ENCODE measurements at regions of chr11 and their contacts with region 1.

Region 1: GRCh38 chr11:111601979-111602864 is at the start of gene SIK2:
- DNase-seq: peak; percentile 98
- H3K4me3 ChIP-seq: peak within 1 kb of the TSS; percentile 82 to 95
- H3K27ac ChIP-seq: peak within 1 kb of the TSS; percentile 74 to 90
- H3K4me1 ChIP-seq: peaks cover 12 to 13% of the 10 kb centered on the region in 2 experiments; a peak in 3 of 4 replicates
- H3K27me3 ChIP-seq: no peaks in the 10 kb centered on the region
- CTCF ChIP-seq: peak; percentile 79
- EP300 ChIP-seq: peak; percentile 17 to 41; a peak in 3 of 4 replicates
- RAD21 ChIP-seq: peak; percentile 98
- polyA plus RNA-seq, gene SIK2: 8.9 and 9.7 TPM in 2 replicates

Region 2: DNA sequence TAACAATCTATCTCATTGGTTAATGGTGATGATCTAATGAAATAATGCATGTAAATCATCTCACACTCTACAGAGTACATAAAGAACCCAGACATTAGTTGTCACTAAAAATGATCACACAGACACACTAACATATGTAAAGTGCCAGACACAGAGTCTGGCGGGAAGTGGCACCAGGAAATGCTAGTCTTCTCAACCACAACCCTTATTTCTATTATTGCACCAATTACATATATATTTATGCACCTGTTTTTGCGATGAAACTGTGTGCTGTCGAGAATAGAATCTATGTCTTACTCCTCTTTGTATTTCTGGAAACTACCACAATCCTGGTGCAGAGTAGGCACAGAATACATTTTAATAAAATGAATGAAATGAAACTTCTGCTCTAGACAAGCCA is 329.8 kb before region 1 on chr11:
- CTCF ChIA-PET with region 1: no interaction called
- POLR2A ChIA-PET with region 1: no interaction called
- DNase-seq: no peak
- H3K4me3 ChIP-seq: no peak overlapping the region
- H3K27ac ChIP-seq: no peak overlapping the region
- H3K4me1 ChIP-seq: no peaks in the 10 kb centered on the region
- H3K27me3 ChIP-seq: peaks cover 6% of the 10 kb centered on the region
- CTCF ChIP-seq: no peak
- EP300 ChIP-seq: no peak
- RAD21 ChIP-seq: no peak

Region 3: DNA sequence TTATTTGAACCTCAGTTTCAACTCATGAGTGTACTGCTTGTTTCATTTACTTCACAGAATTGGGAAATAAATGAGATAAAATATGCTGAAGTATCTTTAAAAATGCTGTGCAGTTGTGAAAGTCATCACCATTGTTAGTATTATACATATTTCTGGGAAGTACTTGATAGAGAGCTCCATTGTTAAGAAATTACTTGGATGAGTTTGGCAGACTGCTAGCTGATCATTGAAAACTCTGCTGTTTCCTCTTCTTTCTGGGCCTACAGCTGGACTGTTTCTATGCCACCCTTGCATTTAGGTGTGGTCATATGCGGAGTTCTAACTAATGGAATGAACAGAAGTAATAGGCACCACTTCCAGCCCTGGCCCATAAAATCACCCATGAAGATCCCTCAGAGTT is 10.0 kb after region 1 on chr11:
- CTCF ChIA-PET with region 1: interaction called, 11 read pairs
- POLR2A ChIA-PET with region 1: no interaction called
- DNase-seq: no peak
- H3K4me3 ChIP-seq: no peak overlapping the region
- H3K27ac ChIP-seq: no peak overlapping the region
- H3K4me1 ChIP-seq: peaks cover 0 to 15% of the 10 kb centered on the region in 2 experiments; a peak in 2 of 4 replicates
- H3K27me3 ChIP-seq: no peaks in the 10 kb centered on the region
- CTCF ChIP-seq: no peak
- EP300 ChIP-seq: no peak
- RAD21 ChIP-seq: no peak

Region 4: DNA sequence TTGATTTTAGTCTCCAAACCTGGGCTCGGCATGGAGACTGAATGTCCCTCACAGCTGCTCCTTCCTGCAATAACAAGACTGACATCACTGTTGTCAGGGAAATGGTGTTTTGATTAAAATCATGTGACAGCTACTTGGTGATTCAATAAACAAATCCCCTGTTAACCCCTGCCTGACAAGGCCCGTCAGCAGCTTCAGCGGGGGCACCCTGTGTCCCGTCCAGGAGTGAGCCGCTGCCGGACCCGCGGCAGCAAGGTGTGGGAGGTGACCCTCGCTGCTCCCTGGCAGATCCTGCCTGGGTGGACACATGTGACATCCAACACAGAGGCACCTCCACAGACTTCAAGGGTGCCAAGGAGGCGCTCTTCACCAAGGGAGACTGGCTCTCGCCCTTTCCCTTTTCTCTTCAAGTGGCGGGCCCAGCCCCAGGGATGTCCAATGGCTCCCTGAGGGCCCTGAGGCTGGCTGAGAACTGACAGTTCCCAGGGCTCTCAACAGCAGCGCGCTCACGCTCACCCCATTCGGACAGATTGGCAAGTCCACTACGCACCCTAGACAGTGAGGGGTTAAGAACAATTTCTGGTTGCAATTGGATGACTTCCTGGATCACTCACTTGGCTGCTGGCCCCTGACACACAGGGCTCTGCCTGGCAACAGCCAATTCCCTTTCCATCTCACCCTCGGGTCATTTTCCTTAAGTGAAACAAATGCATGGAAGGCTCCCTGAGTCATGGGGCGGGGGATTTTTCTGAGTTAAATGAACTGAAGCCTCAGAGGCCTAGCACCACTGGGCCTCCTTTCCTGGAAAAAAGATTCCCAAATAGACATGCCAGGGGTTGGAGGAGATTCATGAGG is 133.3 kb after region 1 on chr11:
- CTCF ChIA-PET with region 1: interaction called, 11 read pairs
- POLR2A ChIA-PET with region 1: no interaction called
- DNase-seq: peak; percentile 88
- H3K4me3 ChIP-seq: peak overlapping the region; percentile 39 to 45; a peak in 3 of 4 replicates
- H3K27ac ChIP-seq: peak overlapping the region; percentile 98 to 99
- H3K4me1 ChIP-seq: peaks cover 39 to 69% of the 10 kb centered on the region in 2 experiments
- H3K27me3 ChIP-seq: no peaks in the 10 kb centered on the region
- CTCF ChIP-seq: peak; percentile 18; the same call in 1 of the 2 replicates
- EP300 ChIP-seq: peak; percentile 42 to 91; a peak in 3 of 4 replicates
- RAD21 ChIP-seq: no peak; the same call in 1 of the 2 replicates

Region 5: DNA sequence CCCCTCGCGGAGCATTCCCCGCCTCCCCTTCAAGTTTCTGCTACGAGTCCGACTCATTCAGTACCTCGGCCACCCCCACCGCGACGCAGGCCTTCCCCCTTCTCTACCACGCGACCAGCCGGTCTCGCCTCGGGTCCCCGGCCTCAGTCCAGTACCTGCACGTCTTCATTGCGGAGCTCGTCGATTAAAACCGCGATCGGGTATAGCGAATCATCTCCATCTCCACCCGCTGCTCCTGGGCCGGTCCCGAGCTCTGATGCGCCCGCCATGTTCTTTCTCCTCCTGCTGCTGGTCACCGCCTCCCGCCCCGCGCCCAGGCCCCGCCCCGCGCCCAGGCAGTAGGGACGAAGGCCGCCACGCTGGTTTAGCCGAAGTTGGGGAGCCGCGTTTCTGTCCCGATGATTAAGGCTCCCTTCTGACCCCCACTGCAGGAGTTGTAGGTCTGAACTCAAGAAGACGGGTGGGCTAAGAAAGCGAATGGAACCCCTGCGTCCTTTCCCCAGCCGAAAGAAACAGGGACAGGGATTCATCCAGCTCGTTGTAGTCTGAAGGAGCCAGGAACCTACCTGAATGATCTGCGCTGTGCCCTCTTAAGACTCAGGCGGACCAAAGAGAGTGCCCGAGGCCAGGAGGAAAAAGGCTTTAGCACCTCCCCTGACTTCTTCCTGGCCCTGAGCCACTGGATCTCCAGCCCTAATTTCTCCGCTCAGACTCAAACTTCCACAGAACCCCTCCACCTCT is 164.0 kb after region 1 on chr11 and contains the start of gene PPP2R1B:
- CTCF ChIA-PET with region 1: interaction called, 18 read pairs
- POLR2A ChIA-PET with region 1: no interaction called
- DNase-seq: peak; percentile 98
- H3K4me3 ChIP-seq: peak within 1 kb of the TSS; percentile 76 to 85
- H3K27ac ChIP-seq: peak within 1 kb of the TSS; percentile 81 to 86
- H3K4me1 ChIP-seq: peaks cover 5% of the 10 kb centered on the region in 2 experiments; a peak in 2 of 4 replicates
- H3K27me3 ChIP-seq: no peaks in the 10 kb centered on the region
- CTCF ChIP-seq: no peak
- EP300 ChIP-seq: no peak
- RAD21 ChIP-seq: no peak
- polyA plus RNA-seq, gene PPP2R1B: 25.9 and 32.3 TPM in 2 replicates

Region 6: DNA sequence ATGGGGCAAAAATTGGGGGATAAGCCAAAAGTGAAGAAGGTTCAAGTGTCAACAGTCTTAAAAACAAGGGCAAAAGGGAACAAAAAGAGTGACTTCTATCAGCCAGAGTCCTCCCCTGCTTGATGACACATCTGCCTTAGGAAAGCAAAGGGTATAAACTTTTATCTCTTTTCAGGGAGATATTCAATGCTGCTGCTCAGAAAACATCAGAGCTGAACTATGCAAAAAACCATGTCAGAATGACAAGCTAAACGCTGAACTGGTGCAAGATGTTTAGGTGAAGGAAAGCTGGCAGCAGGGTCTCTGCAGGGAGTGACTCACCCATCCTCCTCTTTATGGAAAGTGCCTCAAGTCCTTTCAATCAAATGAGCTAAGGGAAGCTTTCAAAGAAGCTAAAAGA is 244.4 kb after region 1 on chr11:
- CTCF ChIA-PET with region 1: interaction called, 39 read pairs
- POLR2A ChIA-PET with region 1: no interaction called
- DNase-seq: no peak
- H3K4me3 ChIP-seq: no peak overlapping the region
- H3K27ac ChIP-seq: peak overlapping the region; percentile 76 to 94; a peak in 3 of 4 replicates
- H3K4me1 ChIP-seq: peaks cover 6 to 21% of the 10 kb centered on the region in 2 experiments
- H3K27me3 ChIP-seq: no peaks in the 10 kb centered on the region
- CTCF ChIP-seq: no peak
- EP300 ChIP-seq: no peak
- RAD21 ChIP-seq: no peak

Measured in SK-N-SH (cell line).